ENCODE measurements at regions of chr2 and their contacts with region 1.

Region 1: GRCh38 chr2:217785544-217786045 is 217.2 kb downstream of the TNS1 start:
- DNase-seq: peak; percentile 83 to 84
- H3K4me3 ChIP-seq: no peak overlapping the region
- H3K27ac ChIP-seq: peak overlapping the region in 1 of 2 donors; percentile 3
- H3K4me1 ChIP-seq: no peaks in the 10 kb centered on the region
- H3K27me3 ChIP-seq: no peaks in the 10 kb centered on the region
- CTCF ChIP-seq: peak; percentile 93 to 96 (median 96)
- POLR2A ChIP-seq: no peak

Region 2: GRCh38 chr2:217610401-217611075 is 175.1 kb before region 1 on chr2:
- intact Hi-C with region 1: no loop called
- DNase-seq: no peak
- H3K4me3 ChIP-seq: no peak overlapping the region
- H3K27ac ChIP-seq: no peak overlapping the region
- H3K4me1 ChIP-seq: no peaks in the 10 kb centered on the region
- H3K27me3 ChIP-seq: no peaks in the 10 kb centered on the region
- CTCF ChIP-seq: no peak
- POLR2A ChIP-seq: no peak

Region 3: DNA sequence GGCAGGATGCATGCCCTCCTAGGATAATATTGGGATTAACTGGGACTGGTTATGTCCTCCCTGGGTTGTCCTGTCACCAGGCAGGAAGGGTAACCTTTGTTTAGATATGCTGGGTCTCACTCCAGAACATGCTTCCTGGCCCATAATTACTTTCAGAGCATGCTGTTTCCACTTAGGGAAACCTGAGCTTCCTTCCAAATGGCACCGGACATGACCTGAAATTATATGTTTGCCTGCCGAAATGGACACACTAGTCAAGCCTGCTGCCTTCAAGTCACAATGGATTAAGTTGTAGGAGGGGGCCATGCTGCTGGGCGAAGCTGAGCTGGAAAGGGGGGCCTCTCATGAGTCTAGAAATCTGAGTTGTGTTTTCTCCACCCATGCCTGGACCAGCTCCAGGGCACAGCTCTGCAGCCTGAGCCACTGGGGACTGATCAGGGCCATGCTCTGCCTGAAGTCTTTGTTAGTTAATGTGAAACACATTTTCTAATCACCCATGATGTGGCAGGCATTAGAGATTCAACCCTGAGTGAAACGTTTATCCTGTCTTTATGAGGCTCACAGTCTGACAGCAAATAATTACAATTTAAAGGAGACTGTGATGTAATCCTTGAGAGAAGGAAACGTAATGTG is 56.1 kb before region 1 on chr2:
- intact Hi-C with region 1: no loop called
- DNase-seq: no peak
- H3K4me3 ChIP-seq: no peak overlapping the region
- H3K27ac ChIP-seq: peak overlapping the region in 1 of 2 donors; percentile 11
- H3K4me1 ChIP-seq: no peaks in the 10 kb centered on the region
- H3K27me3 ChIP-seq: no peaks in the 10 kb centered on the region
- CTCF ChIP-seq: no peak
- POLR2A ChIP-seq: no peak

Region 4: GRCh38 chr2:217756375-217757107 is 29.1 kb before region 1 on chr2:
- intact Hi-C with region 1: no loop called
- DNase-seq: peak; percentile 76 to 79
- H3K4me3 ChIP-seq: peak overlapping the region in 1 of 2 donors; percentile 18
- H3K27ac ChIP-seq: no peak overlapping the region
- H3K4me1 ChIP-seq: no peaks in the 10 kb centered on the region
- H3K27me3 ChIP-seq: no peaks in the 10 kb centered on the region
- CTCF ChIP-seq: peak; percentile 84 to 97 (median 90)
- POLR2A ChIP-seq: peak in 1 of 2 donors; percentile 18

Region 5: GRCh38 chr2:217886720-217887309 is 101.2 kb after region 1 on chr2:
- intact Hi-C with region 1: loop called (anchors 5 kb)
- DNase-seq: peak; percentile 77 to 82
- H3K4me3 ChIP-seq: no peak overlapping the region
- H3K27ac ChIP-seq: peak overlapping the region; percentile 44 to 56
- H3K4me1 ChIP-seq: no peaks in the 10 kb centered on the region
- H3K27me3 ChIP-seq: no peaks in the 10 kb centered on the region
- CTCF ChIP-seq: peak; percentile 78 to 89 (median 80)
- POLR2A ChIP-seq: no peak

Region 6: GRCh38 chr2:217993817-217994463 is 208.3 kb after region 1 on chr2:
- intact Hi-C with region 1: loop called (anchors 5 kb)
- DNase-seq: peak; percentile 69
- H3K4me3 ChIP-seq: no peak overlapping the region
- H3K27ac ChIP-seq: peak overlapping the region; percentile 65 to 78
- H3K4me1 ChIP-seq: peaks cover 6 to 9% of the 10 kb centered on the region in 2 donors
- H3K27me3 ChIP-seq: no peaks in the 10 kb centered on the region
- CTCF ChIP-seq: peak; percentile 60 to 77 (median 70)
- POLR2A ChIP-seq: no peak

Region 7: DNA sequence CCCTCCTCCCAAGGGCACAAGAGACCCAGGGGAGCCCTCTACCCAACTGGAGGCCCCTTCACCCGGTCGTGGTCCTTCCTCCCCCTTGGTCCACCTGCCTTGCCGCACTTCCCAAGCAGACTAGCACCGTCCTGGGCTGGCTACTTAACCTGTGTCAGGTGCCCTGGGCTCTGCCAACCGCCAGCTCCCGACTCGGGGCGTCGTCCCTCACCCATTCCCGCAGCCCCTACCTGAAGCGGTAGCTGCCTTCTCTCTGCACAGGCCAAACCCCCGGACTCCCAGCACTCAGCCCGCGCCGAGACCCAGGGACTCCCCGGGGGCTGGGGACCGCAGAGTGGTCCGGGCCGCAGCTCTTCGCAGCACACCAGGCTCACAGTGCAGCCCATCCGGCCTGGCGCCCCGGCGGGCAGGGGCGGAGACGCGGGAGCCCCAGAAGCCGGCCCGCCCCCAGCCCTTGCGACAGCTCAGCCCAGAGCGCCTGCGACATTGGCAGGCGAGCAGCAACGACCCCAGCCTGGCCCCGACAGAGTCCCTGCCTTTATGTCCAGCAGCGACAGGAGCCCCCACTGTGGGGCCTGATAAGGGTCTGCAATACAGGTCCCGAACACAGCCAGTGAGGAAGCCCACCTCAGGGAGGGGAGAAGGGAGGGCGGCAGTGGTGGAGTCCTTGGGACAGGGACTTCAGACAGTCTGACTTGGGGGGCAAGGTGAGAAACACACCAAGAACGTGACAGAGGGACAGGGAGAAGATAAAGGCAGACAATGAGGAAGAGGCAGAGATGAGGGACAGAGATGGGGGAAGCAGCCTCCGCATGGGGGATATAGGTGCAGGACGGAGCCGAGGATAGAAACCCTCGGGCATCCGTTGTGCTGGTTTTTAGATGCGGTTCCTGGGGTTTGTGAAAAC is 248.2 kb after region 1 on chr2:
- intact Hi-C with region 1: loop called (anchors 2 kb)
- DNase-seq: no peak
- H3K4me3 ChIP-seq: no peak overlapping the region
- H3K27ac ChIP-seq: no peak overlapping the region
- H3K4me1 ChIP-seq: peaks cover 0 to 5% of the 10 kb centered on the region in 2 donors
- H3K27me3 ChIP-seq: no peaks in the 10 kb centered on the region
- CTCF ChIP-seq: no peak
- POLR2A ChIP-seq: no peak

Measured in uterus (tissue), 4 donors.